Caco-2 (cell line): ENCODE measurements at regions of chr12 and their contacts with region 1.

Region 1: DNA sequence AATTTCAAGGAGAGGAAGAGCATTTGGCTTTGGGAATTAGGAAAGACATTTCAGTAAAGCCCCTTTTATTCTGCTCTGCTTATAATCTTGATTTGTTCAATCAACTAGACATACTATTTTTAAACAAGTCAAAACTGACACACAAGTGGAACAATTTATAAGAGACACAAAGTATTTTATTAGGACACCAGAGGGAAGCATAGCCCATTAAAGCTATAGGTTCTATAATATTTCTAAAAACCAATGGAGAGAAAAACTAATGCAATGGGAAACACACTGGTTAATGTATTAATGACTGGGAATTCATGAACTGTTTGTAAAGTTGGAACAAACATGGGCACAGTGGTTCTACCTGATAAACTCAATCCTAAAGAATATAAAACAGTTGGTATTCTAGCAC is 15.3 kb upstream of the CERS5 start:
- DNase-seq: no peak
- H3K4me3 ChIP-seq: no peak overlapping the region
- H3K4me3 Mint-ChIP-seq: no peak overlapping the region
- H3K27ac Mint-ChIP-seq: peak overlapping the region; percentile 39
- H3K4me1 ChIP-seq: peaks cover 12% of the 10 kb centered on the region; the same call in 1 of the 2 replicates
- H3K4me1 Mint-ChIP-seq: peaks cover 22% of the 10 kb centered on the region
- H3K27me3 ChIP-seq: no peaks in the 10 kb centered on the region
- H3K27me3 Mint-ChIP-seq: no peaks in the 10 kb centered on the region
- CTCF ChIP-seq: no peak

Region 2: DNA sequence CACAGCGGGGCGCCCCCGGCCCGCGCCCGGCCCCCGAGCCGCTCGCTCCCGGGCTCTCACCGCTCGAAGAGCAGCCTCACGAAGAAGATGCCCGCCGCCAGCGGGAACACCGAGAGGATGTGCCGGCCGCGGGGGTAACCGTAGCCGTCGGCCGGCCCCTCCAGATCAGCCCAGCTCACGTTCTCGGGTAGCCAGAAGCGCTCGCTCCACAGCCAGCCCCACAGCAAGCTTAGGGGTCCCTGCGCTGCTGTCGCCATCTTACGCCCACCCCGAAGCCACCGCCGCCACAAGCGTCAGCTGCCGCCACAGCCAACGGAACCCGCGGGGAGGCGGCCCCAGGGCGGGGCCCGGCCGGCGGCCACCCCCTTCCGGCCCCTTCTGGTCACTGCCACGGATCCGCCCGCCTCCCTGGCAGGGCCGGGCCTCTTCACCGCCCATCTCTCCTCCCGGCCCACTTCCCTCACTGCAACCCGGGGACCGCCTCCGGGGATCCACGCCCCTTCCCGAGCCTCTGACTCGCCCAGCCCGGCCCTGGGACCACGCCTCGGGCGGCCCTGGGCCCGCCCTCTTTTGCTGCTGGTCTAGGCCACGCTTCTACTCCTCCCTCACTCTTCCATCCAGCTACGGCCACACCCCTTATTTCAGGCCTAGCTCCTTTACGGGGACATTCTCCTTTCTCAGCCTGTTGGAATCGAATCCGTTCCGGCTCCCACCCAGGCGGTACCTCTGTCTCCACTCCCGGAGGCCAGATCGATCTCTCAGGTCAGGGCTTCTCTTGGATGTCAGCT is 15.2 kb before region 1 on chr12 and contains the start of gene CERS5:
- CTCF ChIA-PET with region 1: interaction called, 16 read pairs
- POLR2A ChIA-PET with region 1: no interaction called
- intact Hi-C with region 1: no loop called
- DNase-seq: peak; percentile 99 to 100
- H3K4me3 ChIP-seq: peak within 1 kb of the TSS; percentile 63
- H3K4me3 Mint-ChIP-seq: peak within 1 kb of the TSS; percentile 80
- H3K27ac Mint-ChIP-seq: peak within 1 kb of the TSS; percentile 77
- H3K4me1 ChIP-seq: peaks cover 11% of the 10 kb centered on the region; the same call in 1 of the 2 replicates
- H3K4me1 Mint-ChIP-seq: peaks cover 8% of the 10 kb centered on the region
- H3K27me3 ChIP-seq: no peaks in the 10 kb centered on the region
- H3K27me3 Mint-ChIP-seq: no peaks in the 10 kb centered on the region
- CTCF ChIP-seq: peak in 1 of 2 experiments; percentile 64
- total RNA-seq, gene CERS5: 61.6 and 62.6 TPM in 2 replicates

Region 3: GRCh38 chr12:50222275-50222795 is 39.9 kb after region 1 on chr12:
- CTCF ChIA-PET with region 1: no interaction called
- POLR2A ChIA-PET with region 1: no interaction called
- intact Hi-C with region 1: no loop called
- DNase-seq: peak in 1 of 2 experiments; percentile 33
- H3K4me3 ChIP-seq: no peak overlapping the region
- H3K4me3 Mint-ChIP-seq: no peak overlapping the region
- H3K27ac Mint-ChIP-seq: no peak overlapping the region
- H3K4me1 ChIP-seq: peaks cover 26% of the 10 kb centered on the region; the same call in 1 of the 2 replicates
- H3K4me1 Mint-ChIP-seq: no peaks in the 10 kb centered on the region
- H3K27me3 ChIP-seq: no peaks in the 10 kb centered on the region
- H3K27me3 Mint-ChIP-seq: no peaks in the 10 kb centered on the region
- CTCF ChIP-seq: peak in 1 of 2 experiments; percentile 17

Region 4: GRCh38 chr12:50241178-50241577 is 58.7 kb after region 1 on chr12:
- CTCF ChIA-PET with region 1: no interaction called
- POLR2A ChIA-PET with region 1: no interaction called
- intact Hi-C with region 1: no loop called
- DNase-seq: no peak
- H3K4me3 ChIP-seq: no peak overlapping the region
- H3K4me3 Mint-ChIP-seq: no peak overlapping the region
- H3K27ac Mint-ChIP-seq: peak overlapping the region; percentile 42
- H3K4me1 ChIP-seq: peaks cover 35% of the 10 kb centered on the region
- H3K4me1 Mint-ChIP-seq: peaks cover 31% of the 10 kb centered on the region
- H3K27me3 ChIP-seq: no peaks in the 10 kb centered on the region
- H3K27me3 Mint-ChIP-seq: no peaks in the 10 kb centered on the region
- CTCF ChIP-seq: no peak

Region 5: DNA sequence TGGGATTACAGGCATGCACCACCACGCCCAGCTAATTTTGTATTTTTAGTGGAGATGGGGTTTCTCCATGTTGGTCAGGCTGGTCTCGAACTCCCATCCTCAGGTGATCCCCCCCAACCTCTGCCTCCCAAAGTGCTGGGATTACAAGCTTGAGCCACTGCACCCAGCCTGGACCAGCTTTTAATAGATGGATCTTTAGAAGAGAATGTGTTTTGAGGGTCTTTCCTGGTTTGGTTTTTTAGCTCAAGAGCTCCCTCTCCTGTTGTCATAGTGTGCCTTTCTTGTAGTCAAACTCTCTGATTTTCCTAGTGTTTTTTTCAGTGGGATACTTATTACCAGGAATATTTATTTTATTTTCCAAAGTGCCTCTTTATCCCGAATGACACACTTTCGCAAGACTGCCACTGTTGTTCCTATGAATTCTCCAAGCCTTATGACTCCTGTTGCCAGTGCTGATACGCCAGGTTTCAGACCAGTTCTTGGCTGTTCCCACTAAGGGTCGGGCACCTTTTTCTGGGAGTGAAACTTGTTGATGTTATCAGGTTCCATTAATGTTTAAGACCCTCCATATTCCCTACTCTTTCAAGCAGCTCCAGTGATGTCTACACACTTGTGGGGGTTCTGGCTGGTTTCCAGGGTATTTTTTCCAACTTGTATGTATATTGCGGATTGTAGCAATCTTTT is 132.3 kb after region 1 on chr12:
- CTCF ChIA-PET with region 1: interaction called, 28 read pairs
- POLR2A ChIA-PET with region 1: no interaction called
- intact Hi-C with region 1: loop called (anchors 1 kb)
- DNase-seq: peak in 1 of 2 experiments; percentile 56
- H3K4me3 ChIP-seq: no peak overlapping the region
- H3K4me3 Mint-ChIP-seq: no peak overlapping the region
- H3K27ac Mint-ChIP-seq: no peak overlapping the region
- H3K4me1 ChIP-seq: no peaks in the 10 kb centered on the region
- H3K4me1 Mint-ChIP-seq: no peaks in the 10 kb centered on the region
- H3K27me3 ChIP-seq: no peaks in the 10 kb centered on the region
- H3K27me3 Mint-ChIP-seq: no peaks in the 10 kb centered on the region
- CTCF ChIP-seq: peak; percentile 76 to 79

Region 6: GRCh38 chr12:50354908-50355307 is 172.4 kb after region 1 on chr12:
- CTCF ChIA-PET with region 1: no interaction called
- POLR2A ChIA-PET with region 1: no interaction called
- intact Hi-C with region 1: no loop called
- DNase-seq: no peak
- H3K4me3 ChIP-seq: no peak overlapping the region
- H3K4me3 Mint-ChIP-seq: no peak overlapping the region
- H3K27ac Mint-ChIP-seq: no peak overlapping the region
- H3K4me1 ChIP-seq: 0 out of 2 replicates have a peak, but pooled peaks cover 5% of the 10 kb centered on the region
- H3K4me1 Mint-ChIP-seq: no peaks in the 10 kb centered on the region
- H3K27me3 ChIP-seq: no peaks in the 10 kb centered on the region
- H3K27me3 Mint-ChIP-seq: no peaks in the 10 kb centered on the region
- CTCF ChIP-seq: no peak

Region 7: GRCh38 chr12:50400598-50401364 is 218.3 kb after region 1 on chr12 and contains the start of gene LARP4:
- CTCF ChIA-PET with region 1: no interaction called
- POLR2A ChIA-PET with region 1: no interaction called
- intact Hi-C with region 1: loop called (anchors 5 kb)
- DNase-seq: peak; percentile 98
- H3K4me3 ChIP-seq: peak within 1 kb of the TSS; percentile 83
- H3K4me3 Mint-ChIP-seq: peak within 1 kb of the TSS; percentile 99
- H3K27ac Mint-ChIP-seq: peak within 1 kb of the TSS; percentile 100
- H3K4me1 ChIP-seq: peaks cover 36% of the 10 kb centered on the region
- H3K4me1 Mint-ChIP-seq: peaks cover 34% of the 10 kb centered on the region
- H3K27me3 ChIP-seq: no peaks in the 10 kb centered on the region
- H3K27me3 Mint-ChIP-seq: no peaks in the 10 kb centered on the region
- CTCF ChIP-seq: no peak
- total RNA-seq, gene LARP4: 103 and 115 TPM in 2 replicates